ENCODE measurements at regions of chr16 and their contacts with region 1.

Region 1: GRCh38 chr16:58392215-58393137 is at the start of gene GINS3:
- DNase-seq: peak; percentile 86
- H3K4me3 Mint-ChIP-seq: peak within 1 kb of the TSS; percentile 92
- H3K27ac Mint-ChIP-seq: peak within 1 kb of the TSS; percentile 93
- H3K4me1 Mint-ChIP-seq: peaks cover 5% of the 10 kb centered on the region
- H3K27me3 Mint-ChIP-seq: peaks cover 13% of the 10 kb centered on the region
- CTCF ChIP-seq: no peak
- total RNA-seq, gene GINS3: 4.2 and 5.1 TPM in 2 replicates

Region 2: DNA sequence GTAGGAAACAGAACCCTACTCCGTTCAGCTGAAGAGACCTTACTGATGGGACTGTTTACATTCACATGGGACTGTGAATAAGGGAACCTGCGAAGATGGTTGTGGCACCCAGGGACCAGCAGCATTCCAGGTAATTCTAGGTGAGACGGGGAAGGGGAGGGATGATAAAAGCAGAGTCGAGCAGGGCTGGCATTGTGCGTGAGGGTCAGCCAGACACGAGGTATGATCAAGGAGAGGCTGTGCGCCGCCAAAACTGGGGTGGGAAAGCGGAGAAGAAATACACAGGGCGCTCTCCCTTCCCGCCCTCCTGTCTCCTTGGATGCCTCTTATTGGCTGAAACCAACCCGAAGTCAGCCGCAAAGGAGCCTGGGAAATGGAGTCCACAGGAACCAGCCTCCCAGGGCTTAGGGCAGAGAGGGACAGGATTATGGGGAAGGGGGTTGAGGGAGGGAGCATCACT is 156.2 kb before region 1 on chr16:
- CTCF ChIA-PET with region 1: no interaction called
- POLR2A ChIA-PET with region 1: no interaction called
- intact Hi-C with region 1: no loop called
- DNase-seq: peak; percentile 69
- H3K4me3 Mint-ChIP-seq: peak overlapping the region; percentile 77
- H3K27ac Mint-ChIP-seq: no peak overlapping the region
- H3K4me1 Mint-ChIP-seq: peaks cover 8% of the 10 kb centered on the region
- H3K27me3 Mint-ChIP-seq: peaks cover 46% of the 10 kb centered on the region
- CTCF ChIP-seq: no peak

Region 3: GRCh38 chr16:58409316-58409973 is 17.0 kb after region 1 on chr16:
- CTCF ChIA-PET with region 1: interaction called, 3 read pairs
- POLR2A ChIA-PET with region 1: interaction called, 15 read pairs
- intact Hi-C with region 1: no loop called
- DNase-seq: peak; percentile 60
- H3K4me3 Mint-ChIP-seq: no peak overlapping the region
- H3K27ac Mint-ChIP-seq: peak overlapping the region; percentile 50
- H3K4me1 Mint-ChIP-seq: peaks cover 16% of the 10 kb centered on the region
- H3K27me3 Mint-ChIP-seq: no peaks in the 10 kb centered on the region
- CTCF ChIP-seq: no peak